Left ventricle myocardium inferior (tissue), 1 donor: ENCODE measurements at regions of chr20 and their contacts with region 1.

Region 1: DNA sequence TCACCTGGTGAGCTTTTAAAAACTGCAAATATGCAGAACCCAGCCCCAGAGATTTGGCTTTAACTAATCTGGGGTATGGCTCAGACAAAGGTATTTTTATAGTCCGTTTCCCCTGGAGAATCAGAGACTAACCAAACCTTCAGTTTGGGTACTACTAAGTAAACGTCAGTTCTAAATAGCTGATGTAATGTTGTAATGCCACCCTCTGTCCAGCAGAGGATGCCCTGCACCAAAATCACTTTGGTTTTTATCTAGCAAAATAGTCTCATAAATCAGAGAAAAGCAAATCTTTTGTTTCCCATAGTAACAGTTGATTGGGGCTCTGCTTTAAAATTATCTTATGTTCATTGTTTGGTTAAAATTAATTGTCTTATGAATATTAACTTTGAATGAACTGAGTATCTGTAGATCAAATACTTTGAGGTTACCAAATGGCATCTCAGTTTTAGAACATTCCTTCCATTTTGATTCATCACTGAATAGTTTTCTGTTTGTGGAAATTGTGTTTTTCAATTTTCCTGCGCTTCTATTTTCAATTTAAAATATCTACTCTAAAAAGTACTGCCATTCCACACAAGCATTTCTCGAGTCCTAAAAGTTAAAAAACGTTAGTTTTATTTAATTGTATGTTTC is 278.3 kb upstream of the PLCB4 start:
- DNase-seq: no peak
- H3K4me3 ChIP-seq: no peak overlapping the region
- H3K27ac ChIP-seq: no peak overlapping the region
- H3K4me1 ChIP-seq: peaks cover 11% of the 10 kb centered on the region
- H3K27me3 ChIP-seq: no peaks in the 10 kb centered on the region
- CTCF ChIP-seq: peak; percentile 98

Region 2: GRCh38 chr20:9359561-9360308 is 569.2 kb after region 1 on chr20:
- intact Hi-C with region 1: loop called (anchors 10 kb)
- DNase-seq: no peak
- H3K4me3 ChIP-seq: no peak overlapping the region
- H3K27ac ChIP-seq: peak overlapping the region; percentile 33
- H3K4me1 ChIP-seq: peaks cover 17% of the 10 kb centered on the region
- H3K27me3 ChIP-seq: no peaks in the 10 kb centered on the region
- CTCF ChIP-seq: peak; percentile 70